Posterior vena cava (tissue), 2 donors: ENCODE measurements at regions of chr14 and their contacts with region 1.

Region 1: GRCh38 chr14:103694572-103695026 is 20.7 kb downstream of the XRCC3 start:
- DNase-seq: peak; percentile 50

Region 2: GRCh38 chr14:103641181-103641580 is 53.4 kb before region 1 on chr14:
- intact Hi-C with region 1: no loop called
- DNase-seq: no peak

Region 3: GRCh38 chr14:103728721-103729120 is 34.1 kb after region 1 on chr14:
- intact Hi-C with region 1: loop called in 1 of 2 experiments (anchors 1 kb)
- DNase-seq: no peak

Region 4: DNA sequence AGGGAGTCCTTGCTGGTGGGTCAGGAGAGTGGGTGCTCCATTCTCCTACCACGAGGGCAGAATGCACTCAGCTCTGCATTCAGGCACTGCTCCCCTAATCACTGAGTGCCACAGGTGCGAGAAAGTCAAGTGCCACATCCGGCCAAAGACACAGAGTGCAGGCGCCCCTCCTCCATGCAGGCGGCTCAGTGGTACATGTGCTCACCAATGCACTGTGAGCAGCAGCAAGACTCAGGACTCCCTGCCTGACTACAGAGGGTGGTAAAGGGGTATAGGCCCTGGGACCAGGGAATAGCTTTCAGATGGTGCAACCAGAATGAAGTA is 53.9 kb after region 1 on chr14:
- intact Hi-C with region 1: no loop called
- DNase-seq: no peak

Region 5: GRCh38 chr14:103847451-103848188 is 153.0 kb after region 1 on chr14 and contains the start of gene PPP1R13B:
- intact Hi-C with region 1: no loop called
- DNase-seq: peak; percentile 97
- total RNA-seq, gene PPP1R13B: 17.8 to 29.6 TPM